AG04449 (cell line): ENCODE measurements at regions of chr13 and their contacts with region 1.

Region 1: DNA sequence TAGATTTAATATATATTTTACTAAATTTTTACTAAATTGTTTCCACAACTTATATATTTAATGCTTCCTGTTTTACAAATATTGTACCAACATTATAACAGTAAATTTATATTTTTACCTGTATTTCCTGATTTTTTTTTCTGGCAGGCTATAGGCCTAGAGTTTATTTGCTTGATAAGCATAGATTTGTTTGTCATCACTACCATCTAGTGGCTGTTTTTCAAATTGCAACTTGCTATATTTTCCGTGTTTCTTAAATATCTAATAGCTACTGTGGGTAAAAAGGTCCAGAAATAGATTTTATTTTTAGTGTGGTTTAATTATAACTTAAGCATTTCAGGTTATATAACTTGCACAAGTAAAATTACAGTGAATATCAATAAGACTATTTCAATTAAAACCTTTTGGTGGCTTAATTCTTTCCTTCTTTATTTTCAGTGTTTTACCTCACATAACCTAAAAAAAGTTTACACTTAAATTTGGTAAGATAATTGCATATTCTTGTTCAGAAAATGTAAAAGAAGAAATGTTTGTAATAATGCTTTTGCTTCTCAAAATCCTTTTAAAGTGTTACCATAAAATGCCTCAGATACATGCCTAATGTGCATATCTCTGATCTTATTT is 60.6 kb downstream of the NDFIP2 start:
- DNase-seq: no peak
- H3K4me3 ChIP-seq: no peak overlapping the region
- CTCF ChIP-seq: peak; percentile 24

Region 2: GRCh38 chr13:79413521-79413920 is 128.0 kb before region 1 on chr13:
- CTCF ChIA-PET with region 1: interaction called, 28 read pairs
- POLR2A ChIA-PET with region 1: no interaction called
- DNase-seq: no peak
- H3K4me3 ChIP-seq: no peak overlapping the region
- CTCF ChIP-seq: no peak

Region 3: GRCh38 chr13:79429309-79429708 is 112.2 kb before region 1 on chr13:
- CTCF ChIA-PET with region 1: interaction called, 293 read pairs
- POLR2A ChIA-PET with region 1: interaction called, 3 read pairs
- DNase-seq: no peak
- H3K4me3 ChIP-seq: no peak overlapping the region
- CTCF ChIP-seq: no peak